Heart right ventricle (tissue), 16 donors: ENCODE measurements at regions of chr5 and their contacts with region 1.

Region 1: GRCh38 chr5:122295138-122295537 is 16.9 kb upstream of the SNCAIP start:
- DNase-seq: no peak
- ATAC-seq: peak in 1 of 8 donors; percentile 12
- H3K4me3 ChIP-seq: no peak overlapping the region
- H3K27ac ChIP-seq: no peak overlapping the region
- H3K4me1 ChIP-seq: no peaks in the 10 kb centered on the region
- H3K27me3 ChIP-seq: peaks cover 0 to 7% (median 0%) of the 10 kb centered on the region in 7 donors
- CTCF ChIP-seq: peak in 7 of 9 donors; percentile 28 to 58 (median 39)

Region 2: GRCh38 chr5:122154910-122155309 is 140.2 kb before region 1 on chr5:
- intact Hi-C with region 1: no loop called
- DNase-seq: no peak
- ATAC-seq: peak in 1 of 8 donors; percentile 65
- H3K4me3 ChIP-seq: no peak overlapping the region
- H3K27ac ChIP-seq: no peak overlapping the region
- H3K4me1 ChIP-seq: peaks cover 0 to 8% (median 0%) of the 10 kb centered on the region in 9 donors
- H3K27me3 ChIP-seq: no peaks in the 10 kb centered on the region
- CTCF ChIP-seq: no peak

Region 3: DNA sequence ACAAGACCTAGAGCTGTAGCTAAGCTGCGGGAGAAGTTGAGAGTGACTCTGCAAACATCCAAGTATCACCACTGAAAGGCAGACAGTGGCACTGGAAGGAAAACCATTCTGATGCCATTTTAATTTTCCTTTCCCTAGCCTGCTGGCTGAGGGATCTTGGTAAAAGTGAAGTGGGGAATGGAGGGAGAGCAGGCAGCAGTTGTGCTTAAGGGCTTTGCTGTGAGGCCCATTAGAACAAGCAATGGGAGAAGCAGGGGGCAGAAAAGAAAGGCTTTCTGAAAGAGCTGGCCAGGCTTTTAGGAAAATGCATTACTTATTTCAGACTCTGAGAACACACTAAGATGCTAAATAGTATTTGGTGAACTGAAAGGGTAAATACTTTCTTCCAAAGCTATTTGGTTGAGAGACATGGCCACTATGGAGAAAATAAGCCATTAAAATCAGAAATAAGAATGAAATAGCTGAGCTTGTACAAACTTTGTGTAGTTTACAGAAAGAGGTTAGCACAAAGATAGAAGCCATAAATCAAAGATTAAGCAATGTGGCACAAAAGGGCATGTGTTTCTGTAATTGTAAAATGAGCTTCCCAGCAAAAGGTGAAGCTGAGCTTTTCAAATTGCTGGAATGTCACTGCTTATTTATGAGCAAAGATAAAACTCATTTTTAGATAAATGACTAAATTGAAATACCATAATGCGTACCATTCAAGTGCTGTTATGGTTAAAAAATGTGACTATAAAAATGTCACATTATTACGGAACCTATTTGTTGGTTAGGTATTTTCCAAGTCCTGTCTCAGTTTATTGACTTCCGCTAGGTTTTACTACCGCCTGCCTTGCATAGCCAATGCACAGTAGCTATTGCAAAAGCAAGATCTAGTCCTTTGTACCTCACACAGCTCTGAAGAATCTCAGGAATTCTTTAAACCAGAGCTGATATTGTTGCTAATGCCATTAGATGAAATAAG is 37.7 kb after region 1 on chr5:
- intact Hi-C with region 1: no loop called
- DNase-seq: no peak
- ATAC-seq: no peak
- H3K4me3 ChIP-seq: no peak overlapping the region
- H3K27ac ChIP-seq: no peak overlapping the region
- H3K4me1 ChIP-seq: no peaks in the 10 kb centered on the region
- H3K27me3 ChIP-seq: no peaks in the 10 kb centered on the region
- CTCF ChIP-seq: no peak

Region 4: GRCh38 chr5:122415030-122415800 is 120.1 kb after region 1 on chr5:
- intact Hi-C with region 1: loop called in 4 of 10 experiments (anchors 5 to 10 kb)
- DNase-seq: peak; percentile 25 to 39
- ATAC-seq: peak; percentile 88 to 96 (median 93)
- H3K4me3 ChIP-seq: no peak overlapping the region
- H3K27ac ChIP-seq: no peak overlapping the region
- H3K4me1 ChIP-seq: no peaks in the 10 kb centered on the region
- H3K27me3 ChIP-seq: no peaks in the 10 kb centered on the region
- CTCF ChIP-seq: peak; percentile 25 to 77 (median 70)